A549 (cell line): ENCODE measurements at regions of chr16 and their contacts with region 1.

Region 1: GRCh38 chr16:2911580-2912329 is at the start of gene FLYWCH1:
- DNase-seq: peak; percentile 94 to 99
- ATAC-seq: peak; percentile 86 to 93
- H3K4me3 ChIP-seq: peak within 1 kb of the TSS; percentile 65
- H3K27ac ChIP-seq: peak within 1 kb of the TSS; percentile 86 to 97
- H3K4me1 ChIP-seq: peaks cover 25% of the 10 kb centered on the region
- CTCF ChIP-seq: no peak
- EP300 ChIP-seq: no peak
- POLR2A ChIP-seq: peak; percentile 73
- RAD21 ChIP-seq: no peak
- polyA plus RNA-seq, gene FLYWCH1: 9.3 and 10.6 TPM in 2 replicates

Region 2: DNA sequence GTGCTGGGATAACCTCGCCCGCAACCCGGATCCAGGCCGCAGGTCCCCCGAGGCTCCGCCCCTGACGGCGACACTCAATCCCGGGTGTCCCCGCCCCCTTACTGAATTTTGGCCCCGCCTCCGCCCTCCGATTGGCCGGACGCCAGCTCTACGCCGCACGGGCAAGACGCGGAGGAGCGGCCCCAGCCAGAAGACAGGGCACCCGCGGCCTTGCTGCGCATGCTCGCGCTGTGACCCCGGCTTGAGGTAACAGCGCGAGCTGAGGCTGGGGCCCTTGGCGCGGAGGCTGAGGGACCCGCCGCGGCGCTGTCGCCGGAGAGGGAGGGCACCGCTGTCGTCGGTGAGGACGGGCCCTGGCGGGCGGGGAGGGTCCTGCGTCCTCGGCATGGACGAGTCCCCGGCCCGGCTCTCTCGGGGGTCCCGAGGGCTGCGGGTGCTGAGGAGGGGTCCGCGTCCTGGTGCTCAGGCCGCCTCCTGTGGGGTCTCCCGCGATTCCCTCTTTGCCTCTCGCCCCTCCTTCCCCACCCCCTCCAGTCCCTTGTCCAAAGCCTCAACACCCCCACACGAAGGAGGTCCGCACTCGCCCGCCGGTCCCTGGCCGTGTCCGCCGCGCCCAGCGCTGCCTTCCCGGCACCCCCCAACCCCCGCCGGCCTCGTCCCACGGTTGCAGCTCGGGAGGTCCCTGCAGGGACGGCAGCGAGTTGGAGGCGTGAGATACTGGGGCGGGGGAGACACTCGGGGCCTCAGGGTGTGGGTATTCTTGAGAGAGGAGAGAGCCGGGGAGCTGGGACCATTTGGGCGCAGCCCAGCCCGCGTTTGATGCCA is 28.5 kb before region 1 on chr16 and contains the start of gene FLYWCH2:
- CTCF ChIA-PET with region 1: interaction called, 6 read pairs
- POLR2A ChIA-PET with region 1: interaction called, 10 read pairs
- DNase-seq: peak; percentile 83 to 97
- ATAC-seq: peak; percentile 80 to 86
- H3K4me3 ChIP-seq: peak within 1 kb of the TSS; percentile 94
- H3K27ac ChIP-seq: peak within 1 kb of the TSS; percentile 96 to 97
- H3K4me1 ChIP-seq: peaks cover 5% of the 10 kb centered on the region; the same call in 2 of the 3 replicates
- CTCF ChIP-seq: no peak
- EP300 ChIP-seq: no peak
- POLR2A ChIP-seq: peak; percentile 87
- RAD21 ChIP-seq: no peak
- polyA plus RNA-seq, gene FLYWCH2: 22.7 and 23.2 TPM in 2 replicates